PC-9 (cell line): ENCODE measurements at regions of chr14 and their contacts with region 1.

Region 1: DNA sequence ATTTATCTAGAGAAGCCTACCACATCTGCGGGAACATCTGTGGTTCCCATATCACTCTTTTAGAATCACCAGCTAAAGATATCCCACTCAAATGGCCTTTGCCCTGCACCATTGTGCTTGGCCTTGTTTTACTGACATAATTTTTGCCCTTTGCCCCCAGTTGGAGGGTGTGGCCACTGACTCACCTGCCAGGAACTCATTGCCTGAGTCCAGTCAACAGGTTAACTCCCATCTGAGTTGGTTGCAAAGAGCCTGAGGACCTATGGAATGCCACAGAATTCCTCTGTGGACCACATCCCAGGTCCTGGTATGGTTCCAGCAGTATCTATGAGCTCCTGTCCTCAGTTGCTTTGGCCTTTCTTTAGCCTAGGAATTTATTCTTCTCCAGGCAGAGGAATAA is 55.7 kb upstream of the PTGR2 start:
- DNase-seq: peak; percentile 90 to 94
- H3K4me3 ChIP-seq: no peak overlapping the region
- H3K27ac ChIP-seq: peak overlapping the region; percentile 88
- H3K4me1 ChIP-seq: peaks cover 46% of the 10 kb centered on the region
- H3K27me3 ChIP-seq: no peaks in the 10 kb centered on the region
- CTCF ChIP-seq: no peak

Region 2: GRCh38 chr14:73723797-73724661 is 71.9 kb before region 1 on chr14:
- CTCF ChIA-PET with region 1: no interaction called
- POLR2A ChIA-PET with region 1: no interaction called
- intact Hi-C with region 1: no loop called
- DNase-seq: peak; percentile 90 to 98
- H3K4me3 ChIP-seq: peak overlapping the region; percentile 20
- H3K27ac ChIP-seq: peak overlapping the region; percentile 88
- H3K4me1 ChIP-seq: peaks cover 62% of the 10 kb centered on the region
- H3K27me3 ChIP-seq: no peaks in the 10 kb centered on the region
- CTCF ChIP-seq: peak; percentile 49; the same call in 1 of the 2 replicates

Region 3: GRCh38 chr14:73753959-73754882 is 41.8 kb before region 1 on chr14:
- CTCF ChIA-PET with region 1: interaction called, 11 read pairs
- POLR2A ChIA-PET with region 1: interaction called, 3 read pairs
- intact Hi-C with region 1: no loop called
- DNase-seq: no peak
- H3K4me3 ChIP-seq: no peak overlapping the region
- H3K27ac ChIP-seq: peak overlapping the region; percentile 90
- H3K4me1 ChIP-seq: peaks cover 79% of the 10 kb centered on the region
- H3K27me3 ChIP-seq: no peaks in the 10 kb centered on the region
- CTCF ChIP-seq: no peak

Region 4: DNA sequence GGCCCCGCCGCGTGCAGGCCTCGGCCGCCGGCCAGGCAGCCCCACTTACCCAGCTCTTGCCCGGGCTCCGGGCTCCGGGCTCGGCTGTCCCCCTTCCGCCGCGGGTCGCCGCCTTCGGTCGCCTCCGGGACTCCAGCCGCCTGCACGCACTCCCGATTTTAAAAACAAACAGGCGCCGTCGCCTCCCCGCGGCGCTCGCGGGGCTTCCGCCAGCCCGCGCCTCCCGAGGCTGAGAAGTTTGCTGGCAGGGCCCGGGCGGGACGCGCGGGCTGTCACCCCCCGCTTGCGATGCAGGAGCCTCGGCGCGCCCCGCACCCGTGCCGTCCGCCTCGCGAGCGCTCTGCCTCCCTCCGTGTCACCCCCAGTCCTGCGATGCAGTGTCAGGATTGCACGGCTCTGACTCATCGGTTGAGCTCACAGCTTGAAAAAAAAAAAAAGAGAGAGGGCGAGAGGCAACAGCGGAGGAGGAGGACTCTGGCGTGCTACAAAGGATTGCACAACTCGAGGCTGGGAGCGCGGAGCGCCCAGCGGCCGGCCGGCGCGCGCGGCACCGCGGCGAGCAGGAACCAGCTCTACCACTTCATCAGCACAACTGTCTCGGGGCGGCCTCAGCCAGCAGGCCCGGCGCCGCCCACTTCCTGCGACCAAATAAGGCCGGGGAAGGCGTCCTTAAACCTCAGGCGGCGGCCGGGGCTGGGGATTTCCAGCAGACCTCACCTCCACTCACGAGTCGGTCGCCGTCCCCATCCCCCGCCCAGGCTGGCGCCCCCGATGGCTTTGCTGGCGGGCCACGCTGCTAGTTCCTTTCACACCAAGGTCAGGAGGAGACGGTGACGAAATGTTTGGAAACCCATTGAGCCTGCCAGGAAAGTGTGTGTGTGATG is 36.0 kb before region 1 on chr14:
- CTCF ChIA-PET with region 1: interaction called, 11 read pairs
- POLR2A ChIA-PET with region 1: interaction called, 10 read pairs
- intact Hi-C with region 1: loop called (anchors 1 kb)
- DNase-seq: peak; percentile 96
- H3K4me3 ChIP-seq: peak overlapping the region; percentile 90
- H3K27ac ChIP-seq: peak overlapping the region; percentile 76
- H3K4me1 ChIP-seq: peaks cover 54% of the 10 kb centered on the region
- H3K27me3 ChIP-seq: no peaks in the 10 kb centered on the region
- CTCF ChIP-seq: no peak

Region 5: GRCh38 chr14:73816393-73816816 is 20.4 kb after region 1 on chr14:
- CTCF ChIA-PET with region 1: no interaction called
- POLR2A ChIA-PET with region 1: interaction called, 14 read pairs
- intact Hi-C with region 1: no loop called
- DNase-seq: no peak
- H3K4me3 ChIP-seq: no peak overlapping the region
- H3K27ac ChIP-seq: no peak overlapping the region
- H3K4me1 ChIP-seq: peaks cover 12% of the 10 kb centered on the region
- H3K27me3 ChIP-seq: no peaks in the 10 kb centered on the region
- CTCF ChIP-seq: no peak